A673 (cell line): ENCODE measurements at regions of chr19 and their contacts with region 1.

Region 1: DNA sequence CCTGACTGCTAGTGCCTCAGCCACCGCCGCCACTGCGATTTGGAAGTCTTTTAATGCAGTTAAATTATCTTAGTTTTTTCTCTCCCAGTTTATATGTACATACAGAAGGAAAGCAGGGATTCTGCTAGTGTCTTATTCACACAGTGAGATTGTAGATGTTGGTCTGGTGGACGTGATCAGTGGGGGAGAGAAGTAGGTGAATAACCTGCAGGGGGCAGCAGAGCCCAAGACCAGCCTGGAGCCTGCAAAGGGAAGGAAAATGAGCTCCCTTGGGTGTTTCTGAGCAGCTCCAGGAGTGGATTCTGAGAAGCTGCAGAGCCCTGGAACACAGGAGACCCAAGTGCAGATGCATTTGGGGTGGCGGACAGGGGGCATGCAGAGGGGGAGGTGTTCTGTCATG is 26.3 kb downstream of the ZNF844 start:
- DNase-seq: peak; percentile 83
- H3K4me3 ChIP-seq: no peak overlapping the region
- H3K27ac ChIP-seq: no peak overlapping the region
- H3K4me1 ChIP-seq: peaks cover 9% of the 10 kb centered on the region
- H3K27me3 ChIP-seq: no peaks in the 10 kb centered on the region
- CTCF ChIP-seq: peak; percentile 80

Region 2: DNA sequence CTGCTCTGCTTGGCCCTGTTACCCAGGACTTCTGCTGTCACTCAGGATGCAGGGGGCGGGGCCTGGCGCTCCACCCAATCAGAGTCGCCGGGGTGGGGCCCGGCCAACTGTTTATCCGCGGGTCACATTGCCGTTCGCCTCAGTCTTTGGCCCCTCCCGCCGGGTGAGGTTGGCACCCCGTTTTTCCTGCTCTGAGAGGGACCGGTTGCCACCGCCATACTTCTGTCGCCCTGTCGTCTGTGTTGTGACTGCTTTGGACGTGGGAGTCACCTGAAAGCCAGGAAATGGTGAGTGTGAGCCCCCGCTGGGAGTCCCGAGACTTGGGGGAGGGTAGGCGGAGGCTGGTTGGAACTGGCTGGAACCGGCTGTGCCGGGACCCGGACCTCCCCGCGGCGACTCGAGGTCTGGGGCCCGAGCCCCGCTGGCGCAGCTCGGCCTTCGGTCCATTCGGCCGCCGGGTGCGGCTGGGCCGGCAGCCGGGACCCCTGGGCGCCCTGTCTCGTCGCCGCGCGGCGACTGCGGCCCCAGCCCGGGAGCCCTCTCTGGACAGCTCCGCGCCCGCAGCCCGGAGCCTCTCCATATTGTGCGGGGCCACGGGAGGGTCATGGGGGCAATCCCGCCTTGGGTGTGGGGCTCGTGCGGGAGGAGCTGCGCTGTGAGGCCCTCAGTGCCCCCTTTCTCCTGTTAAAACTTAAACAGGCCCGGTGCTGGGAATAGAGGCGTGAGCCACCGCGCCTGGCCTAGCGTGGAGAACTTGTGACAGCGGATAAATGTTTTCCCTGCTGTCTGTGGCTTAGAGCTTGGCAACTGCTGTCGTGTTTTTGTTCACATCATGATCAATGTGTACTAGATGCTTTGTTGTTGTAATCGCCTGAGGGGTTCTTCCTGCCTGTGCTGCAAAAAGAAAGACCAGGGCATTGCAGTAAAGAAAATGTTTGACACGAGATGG is 25.9 kb before region 1 on chr19 and contains the start of gene ZNF844:
- CTCF ChIA-PET with region 1: interaction called, 14 read pairs
- POLR2A ChIA-PET with region 1: no interaction called
- intact Hi-C with region 1: no loop called
- DNase-seq: peak; percentile 67
- H3K4me3 ChIP-seq: peak within 1 kb of the TSS; percentile 67
- H3K27ac ChIP-seq: no peak within 1 kb of the TSS
- H3K4me1 ChIP-seq: no peaks in the 10 kb centered on the region
- H3K27me3 ChIP-seq: no peaks in the 10 kb centered on the region
- CTCF ChIP-seq: no peak
- total RNA-seq, gene ZNF844: 1.5 TPM in 2 replicates

Region 3: DNA sequence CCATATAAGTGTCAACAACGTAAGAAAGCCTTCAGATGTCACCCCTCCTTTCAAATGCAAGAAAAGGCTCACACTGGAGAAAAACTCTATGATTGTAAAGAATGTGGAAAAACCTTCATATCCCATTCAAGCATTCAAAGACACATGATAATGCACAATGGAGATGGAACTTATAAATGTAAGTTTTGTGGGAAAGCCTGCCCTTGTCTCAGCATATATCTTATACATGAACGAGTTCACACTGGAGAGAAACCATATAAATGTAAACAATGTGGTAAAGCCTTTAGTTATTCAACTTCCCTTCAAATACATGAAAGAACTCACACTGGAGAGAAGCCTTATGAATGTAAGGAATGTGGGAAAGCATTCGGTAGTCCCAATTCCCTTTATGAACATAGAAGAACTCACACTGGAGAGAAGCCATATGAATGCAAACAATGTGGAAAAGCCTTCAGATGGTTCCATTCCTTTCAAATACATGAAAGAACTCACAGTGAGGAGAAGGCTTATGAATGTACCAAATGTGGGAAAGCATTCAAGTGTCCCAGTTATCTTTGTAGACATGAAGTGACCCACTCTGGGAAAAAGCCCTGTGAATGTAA is 15.2 kb before region 1 on chr19:
- CTCF ChIA-PET with region 1: no interaction called
- POLR2A ChIA-PET with region 1: interaction called, 15 read pairs
- intact Hi-C with region 1: no loop called
- DNase-seq: no peak
- H3K4me3 ChIP-seq: no peak overlapping the region
- H3K27ac ChIP-seq: no peak overlapping the region
- H3K4me1 ChIP-seq: no peaks in the 10 kb centered on the region
- H3K27me3 ChIP-seq: no peaks in the 10 kb centered on the region
- CTCF ChIP-seq: no peak

Region 4: GRCh38 chr19:12126707-12127106 is 35.9 kb after region 1 on chr19:
- CTCF ChIA-PET with region 1: interaction called, 10 read pairs
- POLR2A ChIA-PET with region 1: no interaction called
- intact Hi-C with region 1: no loop called
- DNase-seq: peak; percentile 17
- H3K4me3 ChIP-seq: no peak overlapping the region
- H3K27ac ChIP-seq: no peak overlapping the region
- H3K4me1 ChIP-seq: no peaks in the 10 kb centered on the region
- H3K27me3 ChIP-seq: no peaks in the 10 kb centered on the region
- CTCF ChIP-seq: peak; percentile 51